B cell (primary cell): ENCODE measurements at regions of chr19 and their contacts with region 1.

Region 1: DNA sequence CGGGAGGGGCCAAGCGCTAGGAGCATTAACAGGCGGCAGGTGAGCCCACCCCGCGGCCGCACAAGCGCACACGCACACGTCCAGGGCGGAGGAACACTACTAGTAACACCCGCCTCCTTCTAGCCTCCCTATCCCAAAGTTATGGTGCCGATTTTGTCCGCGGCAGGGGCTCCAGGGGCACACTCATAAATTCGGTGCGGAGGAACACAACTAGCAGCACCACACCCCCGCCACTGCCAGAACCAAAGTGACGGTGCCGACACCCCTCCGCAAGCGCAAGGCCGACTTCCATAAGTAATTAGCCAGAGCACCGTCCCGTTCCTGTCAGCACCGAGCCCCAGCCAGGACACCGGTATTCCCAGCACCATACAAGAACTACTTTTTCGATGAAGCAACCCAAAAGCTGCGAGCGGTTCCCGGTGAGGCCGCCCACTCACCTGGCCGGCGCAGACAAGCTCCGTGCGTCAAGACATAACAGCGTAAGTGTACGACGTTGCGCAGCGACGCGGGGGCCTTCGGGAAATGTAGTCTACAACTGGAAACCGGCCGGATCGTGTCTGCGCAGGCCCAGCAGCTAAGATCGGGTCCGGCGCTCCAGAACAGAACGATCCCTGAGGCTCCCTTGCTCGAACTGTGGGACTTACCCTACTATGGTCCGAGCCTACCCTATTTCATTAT is at the starts of genes ZNF540 and ZNF571:
- DNase-seq: peak; percentile 95
- ATAC-seq: peak; percentile 96
- H3K4me3 ChIP-seq: peak within 1 kb of the TSS; percentile 67 to 88 (median 87)
- H3K4me3 Mint-ChIP-seq: peak within 1 kb of the TSS; percentile 99
- H3K27ac ChIP-seq: peak within 1 kb of the TSS; percentile 93 to 96
- H3K27ac Mint-ChIP-seq: peak within 1 kb of the TSS; percentile 99
- H3K4me1 ChIP-seq: peaks cover 11 to 14% of the 10 kb centered on the region in 2 donors
- H3K4me1 Mint-ChIP-seq: peaks cover 25% of the 10 kb centered on the region
- H3K27me3 ChIP-seq: no peaks in the 10 kb centered on the region
- H3K27me3 Mint-ChIP-seq: no peaks in the 10 kb centered on the region
- CTCF ChIP-seq: no peak
- total RNA-seq, gene ZNF540: 10.7 and 10.8 TPM in 2 replicates
- total RNA-seq, gene ZNF571: 10.0 and 13.1 TPM in 2 replicates

Region 2: GRCh38 chr19:37370880-37371661 is 223.4 kb before region 1 on chr19 and contains the start of gene ZNF527:
- CTCF ChIA-PET with region 1: interaction called, 3 read pairs
- POLR2A ChIA-PET with region 1: interaction called, 3 read pairs
- intact Hi-C with region 1: loop called (anchors 1 kb)
- DNase-seq: peak; percentile 98
- ATAC-seq: peak; percentile 96
- H3K4me3 ChIP-seq: peak within 1 kb of the TSS; percentile 59 to 87 (median 79)
- H3K4me3 Mint-ChIP-seq: peak within 1 kb of the TSS; percentile 99
- H3K27ac ChIP-seq: peak within 1 kb of the TSS; percentile 73 to 87
- H3K27ac Mint-ChIP-seq: peak within 1 kb of the TSS; percentile 98
- H3K4me1 ChIP-seq: peaks cover 5 to 14% of the 10 kb centered on the region in 2 donors
- H3K4me1 Mint-ChIP-seq: peaks cover 12% of the 10 kb centered on the region
- H3K27me3 ChIP-seq: no peaks in the 10 kb centered on the region
- H3K27me3 Mint-ChIP-seq: no peaks in the 10 kb centered on the region
- CTCF ChIP-seq: peak; percentile 12
- total RNA-seq, gene ZNF527: 9.0 and 11.4 TPM in 2 replicates

Region 3: DNA sequence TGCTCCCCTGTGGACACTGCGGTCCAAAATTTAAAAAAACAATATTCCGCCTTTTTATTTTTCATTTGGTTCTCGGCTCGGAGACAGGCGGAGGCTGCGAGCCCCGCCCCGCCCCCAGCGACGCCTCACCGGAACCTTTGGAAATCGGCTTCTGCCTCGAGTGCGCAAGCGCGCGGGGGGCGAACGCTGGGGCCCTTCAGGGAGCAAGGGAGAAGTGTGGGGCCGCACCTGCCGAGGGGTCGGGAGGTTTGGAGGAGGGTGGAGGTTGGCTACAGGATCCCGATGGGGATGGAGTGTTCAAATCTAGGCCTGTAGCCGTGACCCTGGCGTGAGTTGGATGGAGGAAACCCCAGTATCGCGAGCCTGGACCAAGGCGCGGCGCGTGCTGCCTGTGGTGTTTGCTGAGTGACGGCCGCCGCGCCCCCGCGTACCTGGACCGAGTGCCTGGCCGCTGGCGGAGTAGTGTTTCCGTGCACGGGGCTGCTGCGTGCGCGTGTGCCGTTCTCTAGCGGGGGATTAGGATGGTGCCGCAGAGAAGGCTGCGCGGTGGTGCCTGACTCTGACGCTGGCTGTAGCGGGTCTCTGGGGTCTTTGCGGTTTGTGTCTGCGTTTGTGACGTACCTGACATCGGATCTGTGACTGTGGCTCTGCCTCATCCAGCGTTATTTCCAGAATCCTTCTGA is 61.4 kb after region 1 on chr19:
- CTCF ChIA-PET with region 1: no interaction called
- POLR2A ChIA-PET with region 1: interaction called, 4 read pairs
- intact Hi-C with region 1: loop called (anchors 1 kb)
- DNase-seq: peak; percentile 89
- ATAC-seq: peak; percentile 69
- H3K4me3 ChIP-seq: peak overlapping the region; percentile 36 to 89 (median 80)
- H3K4me3 Mint-ChIP-seq: peak overlapping the region; percentile 98
- H3K27ac ChIP-seq: peak overlapping the region; percentile 91 to 93
- H3K27ac Mint-ChIP-seq: peak overlapping the region; percentile 97
- H3K4me1 ChIP-seq: peaks cover 15 to 19% of the 10 kb centered on the region in 2 donors
- H3K4me1 Mint-ChIP-seq: peaks cover 30% of the 10 kb centered on the region
- H3K27me3 ChIP-seq: no peaks in the 10 kb centered on the region
- H3K27me3 Mint-ChIP-seq: no peaks in the 10 kb centered on the region
- CTCF ChIP-seq: no peak

Region 4: GRCh38 chr19:37719111-37719926 is 124.9 kb after region 1 on chr19 and contains the start of gene ZNF607:
- CTCF ChIA-PET with region 1: interaction called, 3 read pairs
- POLR2A ChIA-PET with region 1: no interaction called
- intact Hi-C with region 1: loop called (anchors 1 kb)
- DNase-seq: peak; percentile 94
- ATAC-seq: peak; percentile 95
- H3K4me3 ChIP-seq: peak within 1 kb of the TSS; percentile 51 to 86 (median 82)
- H3K4me3 Mint-ChIP-seq: peak within 1 kb of the TSS; percentile 90
- H3K27ac ChIP-seq: peak within 1 kb of the TSS; percentile 62 to 68
- H3K27ac Mint-ChIP-seq: peak within 1 kb of the TSS; percentile 89
- H3K4me1 ChIP-seq: peaks cover 7 to 12% of the 10 kb centered on the region in 2 donors
- H3K4me1 Mint-ChIP-seq: peaks cover 14% of the 10 kb centered on the region
- H3K27me3 ChIP-seq: no peaks in the 10 kb centered on the region
- H3K27me3 Mint-ChIP-seq: no peaks in the 10 kb centered on the region
- CTCF ChIP-seq: peak; percentile 52
- total RNA-seq, gene ZNF607: 19.4 and 21.5 TPM in 2 replicates

Region 5: DNA sequence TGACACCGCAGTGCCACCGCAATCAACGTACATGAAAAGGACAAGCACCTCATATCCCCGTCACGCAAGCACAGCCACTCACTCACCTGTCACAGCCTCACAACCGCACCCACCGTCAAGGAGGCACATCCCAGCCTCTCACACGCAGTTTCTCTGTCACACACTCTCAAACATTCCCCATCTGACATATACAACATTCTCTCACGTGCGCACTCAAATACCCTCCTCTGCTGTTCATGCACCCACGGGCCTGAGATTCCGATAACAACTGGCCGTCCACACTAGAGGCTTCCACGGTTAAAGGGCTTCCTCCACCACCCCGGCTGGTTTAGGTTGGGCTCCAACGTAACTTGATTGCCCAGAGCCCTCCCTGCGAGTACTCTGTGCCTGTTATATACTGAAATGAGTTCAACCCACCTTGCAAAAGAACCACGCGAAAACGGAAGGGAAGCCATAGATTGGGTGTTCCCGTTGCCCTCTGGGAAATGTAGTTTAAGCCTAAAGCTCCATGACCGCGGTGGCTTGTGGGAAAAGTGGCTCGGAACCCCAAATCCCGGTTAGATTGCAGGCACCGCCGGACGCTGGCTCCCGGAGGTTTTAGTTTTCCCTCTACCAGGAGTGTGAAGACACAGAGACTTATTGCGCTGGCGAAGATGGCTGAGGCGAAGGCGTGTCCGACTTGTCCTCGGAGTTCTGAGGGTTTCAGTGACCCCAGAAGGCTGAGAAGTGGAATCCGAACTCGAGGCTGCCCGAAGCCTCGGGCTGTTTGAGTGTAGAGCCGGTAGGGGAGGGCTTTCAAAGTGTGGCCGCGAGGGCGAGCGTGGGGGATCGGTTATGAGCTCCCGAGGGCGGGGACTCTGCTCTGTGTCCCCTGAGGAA is 184.9 kb after region 1 on chr19 and contains the start of gene ZNF573:
- CTCF ChIA-PET with region 1: no interaction called
- POLR2A ChIA-PET with region 1: interaction called, 4 read pairs
- intact Hi-C with region 1: loop called (anchors 1 kb)
- DNase-seq: peak; percentile 91
- ATAC-seq: peak; percentile 84
- H3K4me3 ChIP-seq: peak within 1 kb of the TSS; percentile 71 to 81 (median 74)
- H3K4me3 Mint-ChIP-seq: peak within 1 kb of the TSS; percentile 96
- H3K27ac ChIP-seq: peak within 1 kb of the TSS; percentile 86 to 93
- H3K27ac Mint-ChIP-seq: peak within 1 kb of the TSS; percentile 97
- H3K4me1 ChIP-seq: peaks cover 7 to 11% of the 10 kb centered on the region in 2 donors
- H3K4me1 Mint-ChIP-seq: peaks cover 39% of the 10 kb centered on the region
- H3K27me3 ChIP-seq: no peaks in the 10 kb centered on the region
- H3K27me3 Mint-ChIP-seq: no peaks in the 10 kb centered on the region
- CTCF ChIP-seq: peak; percentile 18
- total RNA-seq, gene ZNF573: 28.8 and 31.1 TPM in 2 replicates